MCF 10A (cell line): ENCODE measurements at regions of chr20 and their contacts with region 1.

Region 1: DNA sequence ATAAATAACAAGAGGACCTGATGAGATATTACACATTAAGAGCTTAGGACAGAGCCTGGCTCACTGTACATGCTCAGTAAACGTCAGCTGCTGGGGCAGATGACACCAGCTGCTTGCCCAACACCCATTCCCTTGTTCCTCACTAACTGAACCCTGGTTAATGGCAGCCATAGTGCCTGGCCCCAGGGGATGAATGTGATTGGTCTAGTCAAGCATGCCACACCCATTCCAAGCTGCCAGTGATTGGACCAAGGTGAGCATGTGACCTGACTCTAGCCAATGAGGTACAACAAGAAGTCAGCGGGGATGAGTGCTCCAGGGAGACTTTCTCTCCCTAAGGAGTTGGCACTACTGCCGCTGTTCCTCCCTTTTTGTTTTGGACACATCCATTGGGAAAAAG is 85.1 kb upstream of the PTPN1 start:
- DNase-seq: no peak
- H3K4me3 Mint-ChIP-seq: no peak overlapping the region
- H3K27ac Mint-ChIP-seq: peak overlapping the region; percentile 92
- H3K4me1 Mint-ChIP-seq: peaks cover 48% of the 10 kb centered on the region
- H3K27me3 Mint-ChIP-seq: no peaks in the 10 kb centered on the region
- CTCF ChIP-seq: no peak

Region 2: GRCh38 chr20:50153485-50154377 is 271.4 kb before region 1 on chr20 and contains the start of gene PEDS1:
- CTCF ChIA-PET with region 1: no interaction called
- POLR2A ChIA-PET with region 1: interaction called, 12 read pairs
- intact Hi-C with region 1: no loop called
- DNase-seq: peak; percentile 85
- H3K4me3 Mint-ChIP-seq: peak within 1 kb of the TSS; percentile 87
- H3K27ac Mint-ChIP-seq: peak within 1 kb of the TSS; percentile 94
- H3K4me1 Mint-ChIP-seq: peaks cover 44% of the 10 kb centered on the region
- H3K27me3 Mint-ChIP-seq: no peaks in the 10 kb centered on the region
- CTCF ChIP-seq: no peak
- total RNA-seq, gene PEDS1: 26.0 and 30.5 TPM in 2 replicates

Region 3: DNA sequence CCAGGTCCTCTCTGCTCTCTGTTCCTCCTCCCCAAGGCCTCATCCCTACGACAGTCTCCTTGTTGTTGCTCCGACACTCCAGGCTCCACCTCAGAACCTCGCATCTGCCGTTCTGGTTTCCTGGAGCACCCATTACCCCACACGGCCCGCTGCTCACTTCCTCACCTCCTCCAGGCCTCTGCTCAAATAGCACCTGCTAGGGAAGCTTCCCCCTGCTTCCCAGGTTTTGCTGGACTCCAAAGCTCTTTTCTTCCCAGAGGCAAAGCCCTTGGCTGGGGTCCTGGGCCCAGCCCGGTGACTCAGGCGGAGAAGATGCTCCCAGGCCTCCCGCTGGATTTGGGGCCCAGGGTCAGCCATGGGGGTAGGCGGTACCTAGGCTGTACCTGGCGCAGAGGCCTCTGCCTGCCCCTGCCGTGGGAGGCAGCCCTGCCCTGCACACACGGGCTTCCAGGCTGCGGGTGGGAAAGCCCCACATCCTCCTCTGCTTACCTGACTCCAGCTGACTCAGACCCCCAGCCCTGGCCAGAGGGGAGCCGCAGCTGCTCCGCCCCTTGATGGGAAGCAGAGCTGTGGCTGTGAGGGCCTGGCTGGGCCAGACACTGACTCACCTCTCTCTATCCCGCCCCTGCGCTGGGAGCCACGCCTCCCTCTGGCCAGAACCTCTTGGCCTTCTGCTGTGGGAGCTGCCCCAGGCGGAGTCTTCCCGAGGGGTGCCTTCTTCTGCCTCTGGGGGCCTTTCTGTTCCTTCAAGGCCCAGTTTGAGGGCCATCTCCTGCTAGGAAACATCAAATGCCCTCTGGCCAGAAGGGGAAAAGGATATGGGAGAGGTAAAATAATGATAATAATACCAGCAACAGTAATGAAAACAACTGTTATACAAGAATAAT is 103.9 kb before region 1 on chr20:
- CTCF ChIA-PET with region 1: interaction called, 4 read pairs
- POLR2A ChIA-PET with region 1: interaction called, 45 read pairs
- intact Hi-C with region 1: no loop called
- DNase-seq: peak; percentile 97
- H3K4me3 Mint-ChIP-seq: peak overlapping the region; percentile 85
- H3K27ac Mint-ChIP-seq: peak overlapping the region; percentile 92
- H3K4me1 Mint-ChIP-seq: peaks cover 32% of the 10 kb centered on the region
- H3K27me3 Mint-ChIP-seq: no peaks in the 10 kb centered on the region
- CTCF ChIP-seq: no peak

Region 4: DNA sequence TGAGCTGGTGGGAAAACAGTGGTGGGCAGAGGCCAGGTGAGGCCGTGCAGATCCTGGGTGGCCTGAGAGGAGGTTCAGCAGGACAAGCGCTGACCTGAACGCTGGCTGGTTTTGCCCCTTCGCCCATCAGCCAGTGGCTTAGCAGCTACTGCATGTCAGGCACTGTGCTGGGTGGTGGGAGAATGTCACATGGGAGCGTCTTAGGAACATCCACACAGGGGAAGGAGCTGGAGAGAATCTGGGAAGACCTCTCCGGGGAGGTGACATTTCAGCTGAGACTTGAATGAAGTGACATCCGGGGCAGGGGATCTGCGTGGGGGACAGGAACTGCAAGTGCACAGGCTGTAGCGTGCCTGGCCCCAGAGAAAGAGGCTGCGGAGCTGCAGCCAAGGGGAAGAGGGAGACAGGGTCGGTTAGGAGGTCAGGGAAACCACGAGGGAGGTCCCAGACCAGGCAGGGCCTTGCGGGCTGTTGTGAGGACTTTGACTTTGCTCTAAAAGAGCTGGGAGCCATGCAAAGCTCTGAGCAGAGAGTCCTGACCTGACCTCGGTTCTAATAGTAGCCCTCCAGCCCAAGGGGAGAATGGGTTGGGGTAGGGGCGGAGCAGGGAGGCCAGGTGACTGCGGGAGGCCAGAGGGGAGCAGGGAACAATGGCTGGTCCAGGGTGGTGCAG is 71.7 kb before region 1 on chr20:
- CTCF ChIA-PET with region 1: interaction called, 3 read pairs
- POLR2A ChIA-PET with region 1: interaction called, 14 read pairs
- intact Hi-C with region 1: no loop called
- DNase-seq: no peak
- H3K4me3 Mint-ChIP-seq: no peak overlapping the region
- H3K27ac Mint-ChIP-seq: peak overlapping the region; percentile 1
- H3K4me1 Mint-ChIP-seq: peaks cover 14% of the 10 kb centered on the region
- H3K27me3 Mint-ChIP-seq: no peaks in the 10 kb centered on the region
- CTCF ChIP-seq: no peak

Region 5: GRCh38 chr20:50409495-50409894 is 15.6 kb before region 1 on chr20:
- CTCF ChIA-PET with region 1: interaction called, 4 read pairs
- POLR2A ChIA-PET with region 1: interaction called, 11 read pairs
- intact Hi-C with region 1: no loop called
- DNase-seq: peak; percentile 35
- H3K4me3 Mint-ChIP-seq: no peak overlapping the region
- H3K27ac Mint-ChIP-seq: no peak overlapping the region
- H3K4me1 Mint-ChIP-seq: peaks cover 12% of the 10 kb centered on the region
- H3K27me3 Mint-ChIP-seq: no peaks in the 10 kb centered on the region
- CTCF ChIP-seq: no peak